HepG2 (cell line): ENCODE measurements at regions of chr1 and their contacts with region 1.

Region 1: GRCh38 chr1:156104065-156104810 is 10.3 kb upstream of the LMNA start:
- DNase-seq: peak; percentile 50
- ATAC-seq: peak; percentile 49
- H3K4me3 ChIP-seq: peak overlapping the region in 1 of 3 experiments; percentile 74; a peak in 2 of 6 replicates
- H3K27ac ChIP-seq: peak overlapping the region; percentile 69
- H3K4me1 ChIP-seq: peaks cover 95% of the 10 kb centered on the region
- H3K27me3 ChIP-seq: 0 out of 5 replicates have a peak, but pooled peaks cover 0 to 8% of the 10 kb centered on the region in 2 experiments
- CTCF ChIP-seq: no peak
- EP300 ChIP-seq: no peak
- POLR2A ChIP-seq: no peak
- RAD21 ChIP-seq: no peak

Region 2: DNA sequence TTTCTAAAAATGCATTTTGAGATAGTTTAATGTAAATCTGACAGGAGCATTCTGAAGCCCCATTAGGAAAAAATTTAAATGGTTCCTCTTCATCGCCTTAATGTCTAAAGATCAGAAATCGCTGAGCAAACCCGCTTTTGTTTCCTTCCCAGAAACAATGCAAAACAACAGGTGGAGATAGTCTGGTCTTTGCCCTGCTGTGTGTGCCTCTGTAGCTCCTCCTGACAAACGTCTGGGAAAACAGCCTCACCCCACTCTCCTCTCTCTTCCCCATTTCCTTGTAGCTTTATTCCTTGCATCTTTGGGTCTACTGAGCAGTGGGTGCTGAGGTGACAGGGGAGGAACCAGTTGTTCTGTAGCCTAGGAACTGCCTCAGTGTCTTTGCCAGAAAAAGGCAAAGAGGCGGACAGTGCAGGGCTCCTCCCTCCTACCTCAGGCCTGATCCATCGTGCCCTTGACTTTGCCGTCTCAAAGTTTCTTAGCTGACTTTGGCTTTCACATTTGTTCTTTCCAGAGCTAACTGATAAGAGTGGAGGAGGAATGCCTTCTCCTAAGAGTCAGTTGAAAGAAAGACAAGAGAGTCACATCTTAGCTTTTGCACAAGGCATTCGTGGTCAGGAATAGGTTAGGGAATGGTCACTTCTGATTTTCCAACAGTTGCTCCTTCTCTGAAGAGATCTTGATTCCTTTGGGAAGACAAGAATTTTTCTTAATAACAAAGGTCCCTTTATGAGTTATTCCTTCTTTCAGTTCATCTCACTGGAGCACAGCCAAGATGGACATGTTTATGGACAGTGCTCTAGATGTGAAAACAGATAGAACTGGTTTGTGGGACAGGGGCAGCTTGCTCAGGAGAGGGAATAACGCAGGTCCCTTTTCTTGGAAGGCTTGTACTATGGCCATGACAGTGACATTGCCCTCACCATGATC is 219.9 kb before region 1 on chr1:
- CTCF ChIA-PET with region 1: no interaction called
- POLR2A ChIA-PET with region 1: no interaction called
- in situ Hi-C with region 1: no loop called
- intact Hi-C with region 1: no loop called
- DNase-seq: no peak
- ATAC-seq: peak; percentile 52
- H3K4me3 ChIP-seq: no peak overlapping the region
- H3K27ac ChIP-seq: no peak overlapping the region
- H3K4me1 ChIP-seq: peaks cover 38% of the 10 kb centered on the region
- H3K27me3 ChIP-seq: peaks cover 0 to 8% of the 10 kb centered on the region in 2 experiments; a peak in 1 of 5 replicates
- CTCF ChIP-seq: no peak
- EP300 ChIP-seq: no peak
- POLR2A ChIP-seq: no peak
- RAD21 ChIP-seq: no peak

Region 3: DNA sequence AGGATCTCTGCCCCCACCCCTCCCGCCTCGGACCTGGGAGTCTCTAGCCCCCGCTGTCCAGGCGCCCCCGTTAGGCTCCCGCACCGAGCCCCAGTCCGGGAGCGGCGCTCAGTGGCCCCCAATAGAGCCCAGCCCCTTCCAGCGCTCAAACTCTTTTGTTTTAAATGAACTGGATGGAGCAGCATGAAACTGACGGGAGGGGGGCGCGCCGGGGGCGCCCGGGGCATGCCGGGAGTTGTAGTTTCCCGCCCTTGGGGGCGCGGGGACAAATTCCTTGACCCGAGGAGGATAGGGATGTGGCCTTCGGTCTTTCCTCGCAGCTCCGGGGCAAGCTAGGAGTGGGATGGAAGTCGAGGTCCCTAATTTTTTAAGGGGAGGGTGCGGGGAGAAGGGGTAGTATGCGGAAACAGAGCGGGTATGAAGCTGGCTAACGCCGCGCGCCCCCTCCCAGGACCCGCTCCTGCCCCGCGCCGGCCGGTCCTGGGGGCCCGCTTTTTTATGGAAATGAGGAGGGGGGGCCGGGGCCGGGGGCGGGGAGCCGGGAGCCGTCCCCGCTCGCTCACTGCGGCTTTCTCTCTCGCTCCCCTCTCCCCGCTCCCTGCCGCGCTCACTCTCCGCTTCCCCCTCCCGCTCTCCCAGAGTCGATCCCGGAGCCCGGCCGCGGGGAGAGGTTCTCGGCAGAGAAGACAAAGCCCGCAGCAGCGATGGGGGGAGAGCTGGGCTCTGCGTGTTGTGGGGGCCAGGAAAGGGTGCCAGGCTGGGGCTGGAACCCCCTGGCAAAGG is 21.7 kb before region 1 on chr1 and contains the start of gene MEX3A:
- CTCF ChIA-PET with region 1: no interaction called
- POLR2A ChIA-PET with region 1: interaction called, 3 read pairs
- in situ Hi-C with region 1: no loop called
- intact Hi-C with region 1: loop called (anchors 1 kb)
- DNase-seq: peak; percentile 75
- ATAC-seq: peak; percentile 77
- H3K4me3 ChIP-seq: peak within 1 kb of the TSS; percentile 88 to 94 (median 89)
- H3K27ac ChIP-seq: peak within 1 kb of the TSS; percentile 77
- H3K4me1 ChIP-seq: peaks cover 71% of the 10 kb centered on the region
- H3K27me3 ChIP-seq: no peaks in the 10 kb centered on the region; a peak in 1 of 5 replicates
- CTCF ChIP-seq: peak; percentile 10; the same call in 1 of the 2 replicates
- EP300 ChIP-seq: no peak
- POLR2A ChIP-seq: peak; percentile 21 to 45; a peak in 2 of 4 replicates
- RAD21 ChIP-seq: no peak
- total RNA-seq, gene MEX3A: 7.6 TPM in 2 replicates

Region 4: DNA sequence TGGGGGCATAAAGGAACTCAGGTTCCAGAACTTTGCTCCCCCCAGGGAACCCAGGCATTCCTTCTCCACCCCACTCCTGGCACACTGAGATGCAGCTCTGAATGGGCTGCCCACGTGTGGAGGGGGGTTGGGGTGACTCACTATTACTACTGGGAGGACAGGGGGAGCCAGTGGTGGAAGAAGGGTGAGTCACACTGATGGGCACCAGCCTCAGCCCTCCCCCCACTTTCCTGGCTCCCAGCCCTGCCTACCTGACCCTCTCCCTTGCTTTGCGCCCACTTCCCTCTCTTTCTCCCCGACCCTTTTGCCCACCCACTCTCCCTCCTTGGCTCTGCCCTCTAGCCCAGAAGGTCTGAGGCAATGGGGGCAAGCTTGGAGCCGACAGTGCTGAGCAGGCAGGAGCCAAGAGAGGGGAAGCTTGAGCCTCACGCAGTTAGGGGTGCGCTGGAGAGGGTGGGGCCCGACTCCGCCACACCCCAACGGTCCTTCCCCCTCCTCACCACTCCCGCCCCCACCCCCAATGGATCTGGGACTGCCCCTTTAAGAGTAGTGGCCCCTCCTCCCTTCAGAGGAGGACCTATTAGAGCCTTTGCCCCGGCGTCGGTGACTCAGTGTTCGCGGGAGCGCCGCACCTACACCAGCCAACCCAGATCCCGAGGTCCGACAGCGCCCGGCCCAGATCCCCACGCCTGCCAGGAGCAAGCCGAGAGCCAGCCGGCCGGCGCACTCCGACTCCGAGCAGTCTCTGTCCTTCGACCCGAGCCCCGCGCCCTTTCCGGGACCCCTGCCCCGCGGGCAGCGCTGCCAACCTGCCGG is 10.1 kb after region 1 on chr1 and contains the start of gene LMNA:
- CTCF ChIA-PET with region 1: no interaction called
- POLR2A ChIA-PET with region 1: interaction called, 59 read pairs
- in situ Hi-C with region 1: no loop called
- intact Hi-C with region 1: no loop called
- DNase-seq: peak; percentile 75
- ATAC-seq: peak; percentile 81
- H3K4me3 ChIP-seq: peak within 1 kb of the TSS; percentile 78 to 92 (median 83)
- H3K27ac ChIP-seq: peak within 1 kb of the TSS; percentile 81
- H3K4me1 ChIP-seq: peaks cover 68% of the 10 kb centered on the region
- H3K27me3 ChIP-seq: no peaks in the 10 kb centered on the region; a peak in 1 of 5 replicates
- CTCF ChIP-seq: 0 out of 2 replicates have a peak, but pooled peaks have one; percentile 17
- EP300 ChIP-seq: no peak
- POLR2A ChIP-seq: peak in 1 of 2 experiments; percentile 90; a peak in 2 of 4 replicates
- RAD21 ChIP-seq: no peak
- total RNA-seq, gene LMNA: 190 and 225 TPM in 2 replicates

Region 5: GRCh38 chr1:156123356-156124196 is 19.3 kb after region 1 on chr1:
- CTCF ChIA-PET with region 1: no interaction called
- POLR2A ChIA-PET with region 1: interaction called, 113 read pairs
- in situ Hi-C with region 1: no loop called
- intact Hi-C with region 1: loop called (anchors 2 kb)
- DNase-seq: peak; percentile 93
- ATAC-seq: peak; percentile 82
- H3K4me3 ChIP-seq: peak overlapping the region in 2 of 3 experiments; percentile 32 to 66; a peak in 4 of 6 replicates
- H3K27ac ChIP-seq: peak overlapping the region; percentile 96
- H3K4me1 ChIP-seq: peaks cover 100% of the 10 kb centered on the region
- H3K27me3 ChIP-seq: no peaks in the 10 kb centered on the region
- CTCF ChIP-seq: peak; percentile 43
- EP300 ChIP-seq: no peak; a peak in 1 of 4 replicates
- POLR2A ChIP-seq: peak in 1 of 2 experiments; percentile 84; a peak in 2 of 4 replicates
- RAD21 ChIP-seq: no peak

Region 6: DNA sequence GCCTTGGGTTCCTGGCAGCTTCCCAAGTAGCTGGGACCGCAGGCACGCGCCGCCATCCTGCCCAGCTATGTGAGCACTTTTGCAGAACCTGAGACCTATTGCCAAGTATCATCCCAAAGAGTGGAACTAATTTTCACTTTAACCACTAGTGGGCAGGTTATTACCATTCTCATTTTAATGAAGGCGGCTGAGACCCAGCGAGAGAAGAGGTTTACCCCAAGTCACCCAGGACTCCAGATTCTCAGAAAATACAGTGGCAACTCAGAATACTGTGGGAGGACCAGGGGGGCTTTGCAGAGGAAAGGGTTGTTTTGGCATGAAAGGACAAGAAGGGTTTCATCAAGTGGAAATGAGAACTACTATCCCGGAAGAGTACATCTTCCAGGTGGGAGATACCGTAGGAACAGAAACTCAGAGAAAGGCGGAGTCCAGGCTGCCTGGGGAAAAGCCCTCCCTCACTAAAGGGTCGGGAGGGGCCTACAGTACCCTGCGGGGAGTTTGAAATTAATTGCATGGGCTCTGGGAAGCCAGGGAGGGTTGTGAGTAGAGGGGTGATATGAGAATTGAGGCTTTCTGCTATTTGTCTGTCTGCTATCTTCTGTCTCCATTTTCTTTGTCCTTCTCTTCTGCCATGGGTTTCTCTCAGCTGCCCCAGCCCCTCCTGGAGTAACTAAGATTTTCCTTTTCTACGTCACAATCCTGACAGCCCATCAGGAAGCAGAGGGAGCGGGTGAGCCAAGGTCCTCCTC is 42.0 kb after region 1 on chr1:
- CTCF ChIA-PET with region 1: no interaction called
- POLR2A ChIA-PET with region 1: no interaction called
- in situ Hi-C with region 1: no loop called
- intact Hi-C with region 1: no loop called
- DNase-seq: peak; percentile 86
- ATAC-seq: peak; percentile 68
- H3K4me3 ChIP-seq: peak overlapping the region; percentile 44 to 63 (median 60)
- H3K27ac ChIP-seq: peak overlapping the region; percentile 31
- H3K4me1 ChIP-seq: peaks cover 59% of the 10 kb centered on the region
- H3K27me3 ChIP-seq: no peaks in the 10 kb centered on the region
- CTCF ChIP-seq: peak; percentile 92
- EP300 ChIP-seq: no peak
- POLR2A ChIP-seq: no peak
- RAD21 ChIP-seq: peak; percentile 92